ENCODE measurements at regions of chr20 and their contacts with region 1.

Region 1: DNA sequence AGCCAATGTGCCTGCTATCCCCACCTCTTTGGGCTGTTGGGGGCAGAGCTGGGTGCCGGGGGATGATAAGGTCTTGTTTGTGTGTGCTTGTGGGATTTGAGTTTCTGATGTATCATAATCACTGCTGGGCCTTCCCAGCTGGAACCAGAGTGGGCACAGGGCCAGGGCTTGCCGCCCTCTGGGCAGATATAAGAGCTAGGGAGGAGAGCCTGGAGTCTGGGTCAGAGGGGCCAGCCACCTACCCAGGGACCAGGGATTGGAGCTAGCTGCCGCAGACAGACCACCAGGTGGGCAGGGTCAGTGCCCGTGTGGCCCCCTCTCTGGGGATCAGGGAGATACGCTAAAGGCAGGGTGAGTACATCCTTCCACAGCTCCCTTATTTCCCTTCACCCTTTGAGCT is 3.1 kb upstream of the TLDC2 start:
- DNase-seq: no peak
- ATAC-seq: no peak
- H3K4me3 Mint-ChIP-seq: no peak overlapping the region
- H3K27ac Mint-ChIP-seq: no peak overlapping the region
- H3K4me1 Mint-ChIP-seq: no peaks in the 10 kb centered on the region
- H3K27me3 Mint-ChIP-seq: no peaks in the 10 kb centered on the region
- CTCF ChIP-seq: no peak

Region 2: GRCh38 chr20:36835453-36836198 is 37.2 kb before region 1 on chr20:
- CTCF ChIA-PET with region 1: no interaction called
- POLR2A ChIA-PET with region 1: no interaction called
- intact Hi-C with region 1: no loop called
- DNase-seq: peak; percentile 93
- ATAC-seq: peak; percentile 96
- H3K4me3 Mint-ChIP-seq: peak overlapping the region; percentile 75
- H3K27ac Mint-ChIP-seq: peak overlapping the region; percentile 88
- H3K4me1 Mint-ChIP-seq: peaks cover 12% of the 10 kb centered on the region
- H3K27me3 Mint-ChIP-seq: no peaks in the 10 kb centered on the region
- CTCF ChIP-seq: no peak

Region 3: GRCh38 chr20:36886859-36887751 is 14.3 kb after region 1 on chr20:
- CTCF ChIA-PET with region 1: interaction called, 17 read pairs
- POLR2A ChIA-PET with region 1: interaction called, 3 read pairs
- intact Hi-C with region 1: no loop called
- DNase-seq: peak; percentile 91
- ATAC-seq: peak; percentile 99
- H3K4me3 Mint-ChIP-seq: no peak overlapping the region
- H3K27ac Mint-ChIP-seq: no peak overlapping the region
- H3K4me1 Mint-ChIP-seq: peaks cover 11% of the 10 kb centered on the region
- H3K27me3 Mint-ChIP-seq: no peaks in the 10 kb centered on the region
- CTCF ChIP-seq: peak; percentile 94